Activated CD4-positive, alpha-beta memory T cell treated with anti-CD3 and anti-CD28 coated beads for 36 hours (primary cell): ENCODE measurements at regions of chr2 and their contacts with region 1.

Region 1: DNA sequence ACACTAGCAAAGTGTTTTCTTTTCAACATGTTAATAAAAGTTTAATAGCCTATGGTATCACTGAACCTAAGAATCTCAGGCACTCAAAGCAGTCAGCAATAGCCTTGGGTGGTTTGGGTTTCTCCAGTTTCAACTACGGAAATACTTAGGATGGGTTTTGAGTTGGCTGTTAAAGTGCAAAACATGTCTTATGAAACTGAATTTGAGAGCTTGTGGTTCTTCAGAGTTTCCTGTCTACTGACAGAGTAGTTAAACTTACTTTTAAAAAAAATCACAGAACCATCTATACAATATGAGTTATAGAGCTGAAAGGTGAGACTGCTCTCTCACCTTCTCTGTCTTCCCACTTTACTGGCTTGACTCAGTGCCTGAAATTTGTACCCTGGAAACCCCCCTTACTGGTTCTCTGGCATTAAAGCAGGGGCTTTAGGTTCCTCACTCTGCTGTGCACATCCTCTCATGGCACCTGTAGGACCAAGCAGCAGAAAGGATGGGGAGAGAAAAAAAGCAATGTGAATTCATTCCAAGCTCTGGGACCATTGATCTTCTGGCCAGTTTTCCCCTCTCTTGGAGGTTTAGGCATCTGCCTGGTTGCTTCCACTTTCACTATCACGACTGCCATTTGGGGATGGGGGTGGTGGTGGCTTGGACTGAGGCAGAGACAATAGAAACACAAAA is 18.1 kb downstream of the CCDC141 start:
- DNase-seq: peak; percentile 48
- H3K4me3 Mint-ChIP-seq: peak overlapping the region; percentile 62
- H3K27ac Mint-ChIP-seq: peak overlapping the region; percentile 81
- H3K4me1 Mint-ChIP-seq: peaks cover 16% of the 10 kb centered on the region
- H3K27me3 Mint-ChIP-seq: no peaks in the 10 kb centered on the region

Region 2: DNA sequence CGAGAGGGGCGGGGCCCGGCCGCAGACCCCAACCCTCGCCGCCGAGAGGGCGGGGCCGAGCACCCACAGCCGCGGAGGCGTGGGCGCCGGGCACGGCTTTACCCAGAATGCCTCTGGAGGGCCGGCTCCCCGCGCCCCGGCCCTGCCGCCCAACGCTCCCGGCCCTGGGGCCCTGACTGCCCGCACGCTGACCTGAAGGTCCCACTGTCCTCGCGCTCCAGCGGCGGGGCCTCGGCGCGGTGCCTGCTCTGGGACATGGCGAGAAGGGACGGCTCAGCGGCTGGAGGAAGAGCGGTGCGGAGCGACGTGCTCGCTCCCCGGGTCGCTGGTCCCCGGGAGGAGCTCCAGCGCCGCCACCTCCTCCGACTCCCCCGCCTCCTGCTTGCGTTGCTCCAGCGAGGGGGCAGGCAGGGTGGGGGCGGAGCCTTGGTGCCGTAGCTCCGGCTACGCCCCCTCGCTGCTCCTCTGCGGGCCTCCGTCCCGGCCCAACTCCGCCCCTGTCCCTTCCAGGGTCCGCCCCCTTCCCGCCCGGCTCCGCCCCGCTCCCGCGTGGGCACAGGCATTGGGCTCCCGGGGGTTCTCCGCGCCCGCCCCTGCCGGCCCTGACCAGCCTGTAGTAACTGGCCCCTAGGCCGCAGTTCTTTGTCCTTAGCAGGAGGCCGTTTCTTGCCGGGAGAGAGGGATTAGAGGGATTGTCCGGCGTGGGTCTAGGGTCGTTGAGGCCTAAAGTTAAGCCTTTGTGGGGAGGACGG is 580.9 kb before region 1 on chr2 and contains the starts of genes PJVK and PRKRA:
- CTCF ChIA-PET with region 1: no interaction called
- POLR2A ChIA-PET with region 1: no interaction called
- intact Hi-C with region 1: loop called (anchors 2 kb)
- DNase-seq: peak; percentile 97
- H3K4me3 Mint-ChIP-seq: peak within 1 kb of the TSS; percentile 89
- H3K27ac Mint-ChIP-seq: peak within 1 kb of the TSS; percentile 95
- H3K4me1 Mint-ChIP-seq: peaks cover 24% of the 10 kb centered on the region
- H3K27me3 Mint-ChIP-seq: no peaks in the 10 kb centered on the region
- total RNA-seq, gene PJVK: 2.3 to 3.0 TPM
- total RNA-seq, gene PRKRA: 56.3 to 60.3 TPM

Region 3: GRCh38 chr2:178863856-178864620 is 167.8 kb before region 1 on chr2:
- CTCF ChIA-PET with region 1: no interaction called
- POLR2A ChIA-PET with region 1: no interaction called
- intact Hi-C with region 1: no loop called
- DNase-seq: no peak
- H3K4me3 Mint-ChIP-seq: no peak overlapping the region
- H3K27ac Mint-ChIP-seq: no peak overlapping the region
- H3K4me1 Mint-ChIP-seq: no peaks in the 10 kb centered on the region
- H3K27me3 Mint-ChIP-seq: no peaks in the 10 kb centered on the region

Region 4: DNA sequence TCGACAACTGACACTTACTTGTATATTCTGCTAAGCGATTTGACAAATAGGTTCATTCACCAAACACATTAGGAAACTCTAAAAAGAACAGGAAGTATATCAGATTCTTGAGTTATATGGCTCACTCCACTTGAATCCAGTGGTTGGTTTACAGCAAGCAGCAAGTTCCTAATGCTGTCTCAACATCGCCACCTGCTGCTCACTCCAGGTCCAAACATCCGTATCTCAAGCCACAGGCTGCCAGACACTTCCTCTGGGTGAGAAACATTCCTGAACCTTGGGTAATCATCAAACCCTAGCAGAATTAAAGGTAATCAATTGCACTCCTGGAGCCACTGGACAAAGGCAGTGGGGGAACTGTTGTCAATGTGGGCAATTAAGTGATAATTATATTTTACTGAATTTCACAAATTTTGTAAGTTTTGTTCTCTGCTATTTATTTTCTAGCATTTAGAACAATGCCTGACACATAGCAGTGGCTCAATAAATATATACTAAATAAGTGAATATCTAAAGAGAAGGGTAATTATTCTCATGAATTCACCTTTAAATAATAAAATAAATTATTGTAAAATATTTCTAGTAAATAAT is 117.5 kb before region 1 on chr2:
- CTCF ChIA-PET with region 1: no interaction called
- POLR2A ChIA-PET with region 1: no interaction called
- intact Hi-C with region 1: loop called (anchors 5 kb)
- DNase-seq: peak; percentile 79
- H3K4me3 Mint-ChIP-seq: no peak overlapping the region
- H3K27ac Mint-ChIP-seq: no peak overlapping the region
- H3K4me1 Mint-ChIP-seq: peaks cover 6% of the 10 kb centered on the region
- H3K27me3 Mint-ChIP-seq: no peaks in the 10 kb centered on the region

Region 5: DNA sequence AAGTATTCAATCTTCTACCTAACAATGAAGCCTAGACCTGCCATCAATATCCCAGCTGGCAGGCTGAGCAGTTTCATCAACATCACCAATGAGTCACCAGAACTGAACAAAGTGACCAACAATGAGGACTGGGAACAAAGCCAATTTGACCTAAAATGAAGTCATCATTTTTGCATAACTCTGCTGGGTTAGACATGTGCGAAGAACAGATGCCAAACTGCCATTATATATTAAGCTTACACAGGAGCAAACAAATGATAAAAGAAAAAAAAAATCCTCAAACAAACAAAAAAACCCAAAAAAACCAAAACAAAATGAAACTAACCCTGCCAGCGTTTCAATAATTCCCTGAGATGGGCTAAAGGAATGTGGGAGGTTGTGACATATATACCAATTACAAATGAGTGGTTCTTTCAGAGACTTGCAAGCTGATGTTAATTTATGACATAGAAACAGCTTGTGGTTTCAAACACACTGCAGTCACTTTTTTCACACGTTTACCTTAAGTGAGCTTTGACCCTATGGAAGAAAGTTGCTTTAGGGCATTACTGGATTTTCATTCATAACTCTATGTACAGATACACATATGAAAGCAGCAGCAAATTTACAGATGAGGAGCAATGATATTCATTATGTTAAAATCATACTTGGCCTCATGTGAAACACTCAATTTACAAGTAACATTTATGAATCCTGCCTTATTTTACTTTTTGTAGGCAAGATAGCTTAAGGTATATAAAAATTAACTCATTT is 75.0 kb after region 1 on chr2:
- CTCF ChIA-PET with region 1: no interaction called
- POLR2A ChIA-PET with region 1: interaction called, 3 read pairs
- intact Hi-C with region 1: loop called (anchors 1 kb)
- DNase-seq: no peak
- H3K4me3 Mint-ChIP-seq: no peak overlapping the region
- H3K27ac Mint-ChIP-seq: peak overlapping the region; percentile 18
- H3K4me1 Mint-ChIP-seq: peaks cover 22% of the 10 kb centered on the region
- H3K27me3 Mint-ChIP-seq: no peaks in the 10 kb centered on the region

Region 6: DNA sequence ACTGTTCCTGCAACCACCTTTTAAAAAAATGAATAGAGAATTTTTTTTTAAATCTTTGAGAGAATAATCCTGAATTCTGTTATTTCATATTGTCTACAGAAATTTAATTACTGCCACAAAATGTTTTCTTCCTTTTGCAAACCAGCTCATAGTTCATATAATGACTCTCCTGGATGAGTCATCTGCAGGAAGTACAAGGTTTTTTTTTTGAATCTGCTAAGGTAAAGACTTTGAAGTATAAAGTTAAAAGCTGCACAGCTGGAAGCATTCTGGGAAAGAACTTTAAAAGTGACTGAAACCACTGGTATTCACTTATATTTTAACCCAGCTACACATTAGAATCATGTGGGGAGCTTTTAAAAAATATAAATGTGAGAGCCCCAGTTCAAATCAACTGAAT is 207.3 kb after region 1 on chr2:
- CTCF ChIA-PET with region 1: no interaction called
- POLR2A ChIA-PET with region 1: no interaction called
- intact Hi-C with region 1: loop called (anchors 5 kb)
- DNase-seq: no peak
- H3K4me3 Mint-ChIP-seq: no peak overlapping the region
- H3K27ac Mint-ChIP-seq: no peak overlapping the region
- H3K4me1 Mint-ChIP-seq: peaks cover 32% of the 10 kb centered on the region
- H3K27me3 Mint-ChIP-seq: no peaks in the 10 kb centered on the region